ENCODE measurements at regions of chr1 and their contacts with region 1.

Region 1: GRCh38 chr1:172357753-172358385 is 62.6 kb upstream of the C1orf105 start:
- DNase-seq: peak; percentile 35
- ATAC-seq: peak; percentile 10
- H3K4me3 Mint-ChIP-seq: peak overlapping the region; percentile 41
- H3K27ac Mint-ChIP-seq: peak overlapping the region; percentile 92
- H3K4me1 Mint-ChIP-seq: peaks cover 71% of the 10 kb centered on the region
- H3K27me3 Mint-ChIP-seq: no peaks in the 10 kb centered on the region
- CTCF ChIP-seq: no peak

Region 2: GRCh38 chr1:172338295-172338735 is 19.6 kb before region 1 on chr1:
- CTCF ChIA-PET with region 1: interaction called, 18 read pairs
- POLR2A ChIA-PET with region 1: interaction called, 25 read pairs
- intact Hi-C with region 1: loop called (anchors 2 kb)
- DNase-seq: peak; percentile 77
- ATAC-seq: peak; percentile 86
- H3K4me3 Mint-ChIP-seq: no peak overlapping the region
- H3K27ac Mint-ChIP-seq: peak overlapping the region; percentile 66
- H3K4me1 Mint-ChIP-seq: peaks cover 31% of the 10 kb centered on the region
- H3K27me3 Mint-ChIP-seq: no peaks in the 10 kb centered on the region
- CTCF ChIP-seq: no peak

Region 3: DNA sequence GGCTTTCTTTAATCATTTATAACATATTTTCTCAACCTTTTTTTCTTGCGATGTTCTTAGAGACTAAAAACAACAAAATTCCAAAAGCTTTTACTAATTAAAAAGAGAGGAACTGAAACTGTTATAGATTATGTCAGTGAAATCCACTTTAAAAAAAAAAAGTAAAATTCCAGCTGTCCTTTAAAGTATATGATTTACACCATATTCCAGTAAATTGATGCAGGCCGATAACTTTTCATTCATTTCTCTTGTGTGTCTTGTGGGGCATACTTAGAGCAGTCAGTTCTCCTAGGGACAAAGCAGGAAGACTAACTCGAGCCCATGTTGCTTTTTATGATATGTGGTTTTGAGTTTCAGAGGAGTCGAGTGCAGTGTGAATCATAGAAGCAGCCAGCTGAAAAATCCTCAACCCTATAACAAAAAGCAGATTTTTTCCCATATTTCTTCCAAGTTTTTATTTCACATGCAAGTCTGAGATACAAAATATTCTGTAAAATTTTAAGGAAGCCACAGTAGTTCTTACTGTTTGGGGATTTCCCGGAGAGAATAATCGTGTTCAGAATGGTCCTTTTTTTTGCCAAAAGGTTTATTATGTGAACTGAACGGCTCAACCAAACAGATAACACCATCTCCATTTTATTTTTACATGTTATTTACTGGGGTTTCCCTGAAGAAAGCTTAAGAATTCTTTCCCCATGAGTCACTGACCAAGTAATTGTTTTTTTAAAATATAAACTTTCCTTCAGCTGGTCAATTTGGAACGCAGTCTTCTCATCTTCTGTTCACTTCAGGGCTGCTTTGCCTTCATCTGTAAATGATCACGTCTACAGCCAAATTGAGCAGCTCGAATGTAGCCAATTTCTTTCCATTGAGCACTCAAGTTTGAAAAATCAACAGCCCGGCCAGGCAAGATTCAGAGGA is 14.4 kb before region 1 on chr1:
- CTCF ChIA-PET with region 1: interaction called, 18 read pairs
- POLR2A ChIA-PET with region 1: interaction called, 25 read pairs
- intact Hi-C with region 1: loop called (anchors 2 kb)
- DNase-seq: no peak
- ATAC-seq: peak; percentile 34
- H3K4me3 Mint-ChIP-seq: no peak overlapping the region
- H3K27ac Mint-ChIP-seq: peak overlapping the region; percentile 0
- H3K4me1 Mint-ChIP-seq: peaks cover 35% of the 10 kb centered on the region
- H3K27me3 Mint-ChIP-seq: no peaks in the 10 kb centered on the region
- CTCF ChIP-seq: no peak

Region 4: DNA sequence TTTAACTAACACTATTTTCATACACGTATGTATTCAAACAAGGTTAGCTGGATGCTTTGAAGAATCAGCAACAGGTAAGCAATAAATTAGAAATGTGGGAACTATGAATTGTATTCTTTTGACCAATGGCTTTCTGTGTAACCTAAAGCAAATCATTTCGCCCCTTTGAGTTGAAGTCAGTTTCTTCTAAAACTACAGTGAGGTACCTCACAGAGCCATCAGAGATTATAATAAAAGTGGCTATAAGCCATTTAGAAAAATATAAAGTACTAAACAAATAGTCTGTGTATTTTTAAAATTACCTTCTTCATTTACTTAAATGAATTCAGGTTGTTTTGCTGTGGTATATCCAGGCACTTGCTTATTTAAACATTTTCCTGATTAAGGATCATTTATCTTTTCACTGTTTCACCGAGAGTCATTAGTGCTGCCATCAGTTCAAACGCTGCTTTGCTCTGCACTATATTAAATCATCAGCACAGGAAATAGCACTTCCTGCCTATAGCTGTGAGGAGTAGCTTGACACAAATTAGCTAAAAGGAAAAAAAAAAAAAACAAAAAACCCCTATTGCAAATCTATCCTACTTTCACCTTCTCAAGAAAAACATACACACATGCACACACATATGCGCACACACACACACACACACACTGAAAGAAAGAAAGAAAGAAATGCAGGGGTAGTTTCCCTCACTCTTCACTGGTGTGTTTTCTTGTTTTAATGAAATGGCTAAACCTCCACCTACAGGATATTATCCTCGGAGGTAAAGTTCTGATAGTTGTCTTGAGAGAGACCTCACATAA is 22.8 kb after region 1 on chr1:
- CTCF ChIA-PET with region 1: interaction called, 13 read pairs
- POLR2A ChIA-PET with region 1: interaction called, 5 read pairs
- intact Hi-C with region 1: loop called (anchors 2 kb)
- DNase-seq: peak; percentile 40
- ATAC-seq: peak; percentile 97
- H3K4me3 Mint-ChIP-seq: peak overlapping the region; percentile 57
- H3K27ac Mint-ChIP-seq: peak overlapping the region; percentile 93
- H3K4me1 Mint-ChIP-seq: peaks cover 32% of the 10 kb centered on the region
- H3K27me3 Mint-ChIP-seq: no peaks in the 10 kb centered on the region
- CTCF ChIP-seq: no peak